ENCODE measurements at regions of chr9 and their contacts with region 1.

Region 1: GRCh38 chr9:121322037-121322775 is 47.8 kb downstream of the STOM start:
- DNase-seq: peak; percentile 88
- H3K4me3 ChIP-seq: no peak overlapping the region
- H3K27me3 ChIP-seq: no peaks in the 10 kb centered on the region
- CTCF ChIP-seq: no peak

Region 2: GRCh38 chr9:121267689-121268597 is 54.3 kb before region 1 on chr9 and contains the start of gene GSN:
- CTCF ChIA-PET with region 1: interaction called, 31 read pairs
- POLR2A ChIA-PET with region 1: no interaction called
- DNase-seq: no peak
- H3K4me3 ChIP-seq: peak within 1 kb of the TSS; percentile 89
- H3K27me3 ChIP-seq: no peaks in the 10 kb centered on the region
- CTCF ChIP-seq: peak; percentile 24; the same call in 1 of the 2 replicates
- polyA plus RNA-seq, gene GSN: 493 and 765 TPM in 2 replicates

Region 3: GRCh38 chr9:121299467-121300234 is 22.6 kb before region 1 on chr9:
- CTCF ChIA-PET with region 1: interaction called, 15 read pairs
- POLR2A ChIA-PET with region 1: no interaction called
- DNase-seq: no peak
- H3K4me3 ChIP-seq: peak overlapping the region; percentile 35
- H3K27me3 ChIP-seq: no peaks in the 10 kb centered on the region
- CTCF ChIP-seq: no peak

Region 4: DNA sequence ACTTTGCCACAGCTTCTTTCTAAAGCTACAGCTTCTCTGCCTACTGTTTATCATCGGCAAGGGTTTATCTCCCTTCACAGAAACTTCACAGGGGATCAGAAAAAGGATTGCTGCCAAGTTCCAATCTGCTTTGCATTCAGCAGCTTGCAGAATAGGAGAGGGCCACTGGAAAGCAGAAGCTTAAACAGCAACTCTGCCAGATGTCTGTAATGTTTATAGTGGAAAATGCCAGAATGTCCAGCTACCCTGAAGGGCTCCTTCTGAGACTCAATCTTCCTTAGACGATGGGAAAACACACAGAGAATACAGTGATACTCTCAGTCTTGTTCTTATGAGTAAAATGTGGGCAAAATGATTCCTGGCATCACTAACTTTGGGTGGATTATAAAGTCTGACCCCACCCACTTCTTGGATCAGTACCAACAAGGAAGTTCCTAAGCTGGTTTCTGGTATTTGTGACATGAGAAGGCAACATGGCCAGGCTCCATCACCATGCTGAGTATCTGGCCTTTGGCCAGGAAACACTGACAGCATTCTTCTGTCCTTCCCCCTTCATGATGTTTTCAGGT is 28.9 kb after region 1 on chr9:
- CTCF ChIA-PET with region 1: interaction called, 11 read pairs
- POLR2A ChIA-PET with region 1: no interaction called
- DNase-seq: peak; percentile 80
- H3K4me3 ChIP-seq: no peak overlapping the region
- H3K27me3 ChIP-seq: no peaks in the 10 kb centered on the region
- CTCF ChIP-seq: no peak

Region 5: GRCh38 chr9:121383715-121384114 is 61.5 kb after region 1 on chr9:
- CTCF ChIA-PET with region 1: interaction called, 63 read pairs
- POLR2A ChIA-PET with region 1: no interaction called
- DNase-seq: no peak
- H3K4me3 ChIP-seq: no peak overlapping the region
- H3K27me3 ChIP-seq: no peaks in the 10 kb centered on the region
- CTCF ChIP-seq: no peak

Region 6: DNA sequence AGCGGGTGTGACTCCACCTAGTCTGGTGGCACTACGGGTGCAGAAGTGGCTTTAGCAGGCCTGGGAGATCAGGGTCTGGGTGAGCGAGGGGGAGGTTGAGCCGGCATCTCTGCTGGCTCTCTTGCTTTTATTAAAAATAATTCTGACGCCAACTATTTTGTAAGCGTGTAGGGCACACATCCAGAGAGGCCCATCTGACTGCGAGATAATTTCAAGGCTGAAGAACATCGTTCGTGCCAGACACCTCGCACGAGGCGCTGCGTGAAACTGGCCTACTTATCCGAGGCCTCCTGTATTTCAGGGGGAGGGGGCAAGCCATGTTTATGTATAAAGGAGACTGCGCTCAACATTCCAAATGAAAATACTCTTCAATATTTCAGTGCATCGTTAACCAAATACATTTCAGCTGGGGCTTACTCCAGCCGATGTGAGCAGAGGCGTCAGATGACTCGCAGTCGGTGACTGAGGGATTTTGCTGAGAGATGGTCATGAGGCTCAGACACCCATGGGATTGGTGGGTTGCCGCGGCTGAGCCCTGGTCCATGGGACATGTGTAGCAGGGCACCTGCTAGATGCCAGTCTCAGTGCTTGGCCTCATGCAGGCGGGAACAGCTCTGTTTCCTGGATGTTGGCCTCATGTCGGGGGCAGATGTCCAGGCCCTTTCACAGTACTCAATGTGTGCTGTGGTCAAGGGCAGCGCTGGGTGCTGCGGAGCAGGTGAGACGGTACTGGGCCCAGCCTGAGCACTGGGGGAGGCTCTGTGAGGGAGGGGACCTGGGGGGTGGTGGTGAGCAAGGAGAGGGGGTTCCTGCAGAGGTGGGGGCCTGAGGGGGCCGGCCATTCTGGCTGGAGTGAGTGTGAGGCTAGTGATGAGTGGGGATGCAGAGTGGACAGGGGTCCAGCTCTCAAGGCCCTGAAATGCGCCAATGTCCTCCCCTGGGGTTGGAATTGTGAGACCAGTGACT is 530.7 kb after region 1 on chr9:
- CTCF ChIA-PET with region 1: no interaction called
- POLR2A ChIA-PET with region 1: no interaction called
- DNase-seq: no peak
- H3K4me3 ChIP-seq: no peak overlapping the region
- H3K27me3 ChIP-seq: 0 out of 2 replicates have a peak, but pooled peaks cover 2% of the 10 kb centered on the region
- CTCF ChIP-seq: no peak